Dendritic cell treated with granulocyte-macrophage colony-stimulating factor and Interleukin-4, amounts not matched to agents 40 ng/mL and 50 ng/mL, for 4 days (primary cell): ENCODE measurements at regions of chr3 and their contacts with region 1.

Region 1: GRCh38 chr3:140736863-140737460 is 59.1 kb downstream of the TRIM42 start:
- H3K4me3 Mint-ChIP-seq: no peak overlapping the region
- H3K27ac Mint-ChIP-seq: no peak overlapping the region
- H3K4me1 Mint-ChIP-seq: peaks cover 2% of the 10 kb centered on the region
- H3K27me3 Mint-ChIP-seq: peaks cover 21% of the 10 kb centered on the region

Region 2: GRCh38 chr3:139935016-139935865 is 801.7 kb before region 1 on chr3 and contains the start of gene CLSTN2:
- intact Hi-C with region 1: loop called (anchors 2 kb)
- H3K4me3 Mint-ChIP-seq: peak within 1 kb of the TSS; percentile 61
- H3K27ac Mint-ChIP-seq: no peak within 1 kb of the TSS
- H3K4me1 Mint-ChIP-seq: peaks cover 18% of the 10 kb centered on the region
- H3K27me3 Mint-ChIP-seq: peaks cover 64% of the 10 kb centered on the region

Region 3: GRCh38 chr3:140276703-140277102 is 460.3 kb before region 1 on chr3:
- intact Hi-C with region 1: loop called (anchors 5 kb)
- H3K4me3 Mint-ChIP-seq: no peak overlapping the region
- H3K27ac Mint-ChIP-seq: no peak overlapping the region
- H3K4me1 Mint-ChIP-seq: no peaks in the 10 kb centered on the region
- H3K27me3 Mint-ChIP-seq: peaks cover 2% of the 10 kb centered on the region